SK-N-SH (cell line): ENCODE measurements at regions of chr2 and their contacts with region 1.

Region 1: GRCh38 chr2:37555457-37555856 is 116.0 kb downstream of the CDC42EP3 start:
- DNase-seq: no peak
- H3K4me3 ChIP-seq: no peak overlapping the region
- H3K27ac ChIP-seq: peak overlapping the region in 1 of 2 experiments; percentile 99; a peak in 2 of 4 replicates
- H3K4me1 ChIP-seq: peaks cover under 1 to 42% of the 10 kb centered on the region in 2 experiments; a peak in 3 of 4 replicates
- H3K27me3 ChIP-seq: no peaks in the 10 kb centered on the region
- CTCF ChIP-seq: no peak
- EP300 ChIP-seq: no peak
- RAD21 ChIP-seq: no peak

Region 2: DNA sequence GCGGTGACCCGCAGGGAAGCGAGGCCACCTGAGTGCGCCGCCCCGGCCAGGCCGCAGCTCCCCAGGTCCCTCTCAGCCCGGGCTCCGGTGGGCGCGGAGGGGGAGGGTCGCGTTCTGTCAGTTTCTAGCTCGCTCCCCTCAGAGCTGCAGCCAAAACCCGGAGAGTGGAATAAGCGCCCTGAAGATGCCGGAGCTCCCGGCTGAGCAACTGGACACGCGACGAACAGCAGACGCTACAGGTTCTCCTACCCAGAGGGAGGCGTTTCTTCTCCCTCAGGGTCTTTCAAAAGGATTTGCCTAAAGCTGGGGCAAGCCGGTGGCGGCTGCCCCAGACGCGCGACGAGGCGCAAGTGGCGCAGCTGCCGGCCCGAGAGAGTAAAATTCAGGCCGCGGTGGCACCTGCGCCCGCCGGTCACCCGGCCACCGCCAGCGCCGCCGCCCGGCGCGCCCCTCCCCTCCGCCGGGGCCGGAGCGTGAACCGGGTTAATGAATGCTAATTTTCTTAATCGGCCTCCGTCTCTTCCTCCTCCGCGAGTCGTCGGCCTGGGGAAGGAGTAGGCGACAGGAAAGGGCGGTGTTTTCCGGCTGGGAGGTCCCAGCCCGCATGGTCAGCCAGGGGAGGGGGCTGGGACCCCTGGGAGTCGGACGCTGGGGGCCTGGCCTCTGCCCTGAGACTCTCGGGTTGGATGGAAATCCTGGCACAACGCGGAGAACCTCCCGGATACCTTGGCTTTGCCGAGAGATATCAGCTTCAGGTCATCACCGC is 116.8 kb after region 1 on chr2:
- CTCF ChIA-PET with region 1: interaction called, 9 read pairs
- POLR2A ChIA-PET with region 1: interaction called, 22 read pairs
- DNase-seq: peak; percentile 98
- H3K4me3 ChIP-seq: peak overlapping the region; percentile 80 to 100
- H3K27ac ChIP-seq: peak overlapping the region; percentile 86 to 99
- H3K4me1 ChIP-seq: peaks cover 21 to 26% of the 10 kb centered on the region in 2 experiments
- H3K27me3 ChIP-seq: no peaks in the 10 kb centered on the region
- CTCF ChIP-seq: peak; percentile 10; the same call in 1 of the 2 replicates
- EP300 ChIP-seq: peak in 1 of 2 experiments; percentile 58; a peak in 2 of 4 replicates
- RAD21 ChIP-seq: peak; percentile 42

Region 3: DNA sequence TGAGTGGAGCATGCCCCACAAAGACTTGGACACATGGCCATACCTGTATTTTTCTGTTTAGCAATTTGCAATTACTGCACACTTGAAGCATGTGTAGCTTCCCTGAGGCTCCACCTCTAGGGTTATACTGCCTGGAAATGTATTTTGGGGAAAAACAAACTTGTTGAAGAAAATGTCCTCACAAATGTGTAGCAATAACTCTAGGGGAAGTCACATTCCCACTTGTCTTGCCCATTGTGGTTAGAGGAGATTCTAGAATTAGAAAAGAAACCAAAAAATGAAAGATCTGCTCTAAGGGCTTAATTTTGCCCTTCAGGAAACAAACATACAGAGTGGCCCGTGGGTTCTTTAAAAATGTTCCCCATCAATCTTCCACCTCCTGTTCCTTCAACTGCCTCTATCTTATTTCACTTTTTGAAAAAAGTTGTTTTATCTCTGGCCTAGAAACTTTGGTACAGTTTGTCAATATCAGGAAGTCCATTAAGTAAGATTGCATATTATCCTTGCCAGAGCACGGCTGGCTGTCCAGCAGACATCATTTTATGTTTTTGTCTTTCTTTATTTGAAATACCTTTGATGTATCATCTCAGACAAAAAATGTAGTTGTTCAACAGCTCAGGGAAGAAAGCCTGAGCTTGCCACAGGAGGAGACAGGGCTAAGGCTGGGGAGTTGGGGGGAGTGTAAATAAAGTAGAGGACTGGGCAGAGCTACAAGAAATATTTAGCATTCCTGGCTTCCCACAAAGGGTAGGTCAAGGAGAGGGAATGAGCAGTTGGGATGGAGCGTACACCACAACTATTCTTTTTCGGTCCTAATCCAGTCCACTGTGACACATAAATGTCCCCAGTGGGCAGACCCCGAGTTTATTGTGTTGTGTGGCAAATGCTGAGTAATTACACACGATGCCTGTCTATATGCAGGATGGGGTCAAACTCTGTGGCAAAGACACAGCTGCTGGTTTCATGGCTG is 212.8 kb after region 1 on chr2:
- CTCF ChIA-PET with region 1: no interaction called
- POLR2A ChIA-PET with region 1: no interaction called
- DNase-seq: peak; percentile 12
- H3K4me3 ChIP-seq: peak overlapping the region in 1 of 2 experiments; percentile 13; a peak in 2 of 4 replicates
- H3K27ac ChIP-seq: peak overlapping the region; percentile 77 to 92
- H3K4me1 ChIP-seq: peaks cover 15 to 58% of the 10 kb centered on the region in 2 experiments
- H3K27me3 ChIP-seq: no peaks in the 10 kb centered on the region
- CTCF ChIP-seq: no peak
- EP300 ChIP-seq: peak; percentile 66 to 98
- RAD21 ChIP-seq: no peak